ENCODE measurements at regions of chr7 and their contacts with region 1.

Region 1: DNA sequence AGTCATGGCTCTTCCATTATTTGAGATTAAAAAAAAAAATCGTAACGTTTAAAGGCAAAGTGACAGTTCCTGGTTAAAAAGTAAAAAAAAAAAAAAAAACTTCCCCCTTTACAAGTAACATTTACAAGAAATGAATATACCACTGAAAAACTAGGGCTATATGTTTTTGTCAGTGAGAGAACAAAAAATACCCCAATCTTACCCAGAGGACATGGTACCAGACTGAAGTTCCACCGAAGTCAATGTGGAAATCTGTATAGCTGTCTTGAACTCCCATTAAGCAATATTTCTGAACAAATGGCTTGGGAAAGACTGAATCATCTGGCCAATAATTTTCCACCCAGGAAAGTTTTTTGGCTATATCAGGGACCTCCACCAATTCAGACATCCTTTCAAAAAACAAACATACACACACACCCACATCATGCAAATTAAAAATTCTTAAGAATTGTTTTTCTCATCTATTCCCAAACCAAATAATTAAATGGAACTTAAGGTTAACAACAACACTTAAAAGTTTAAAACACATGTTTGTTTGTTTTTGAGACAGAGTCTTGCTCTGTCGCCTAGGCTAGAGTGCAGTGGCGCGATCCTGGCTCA is 50.2 kb downstream of the KDM7A start:
- DNase-seq: no peak
- H3K4me3 ChIP-seq: no peak overlapping the region
- H3K27ac ChIP-seq: no peak overlapping the region
- H3K4me1 ChIP-seq: peaks cover 2% of the 10 kb centered on the region
- H3K27me3 ChIP-seq: no peaks in the 10 kb centered on the region
- CTCF ChIP-seq: no peak
- EP300 ChIP-seq: no peak
- POLR2A ChIP-seq: no peak

Region 2: GRCh38 chr7:141114029-141114671 is 987.6 kb after region 1 on chr7:
- intact Hi-C with region 1: loop called in 1 of 4 experiments (anchors 5 kb)
- DNase-seq: no peak
- H3K4me3 ChIP-seq: no peak overlapping the region
- H3K27ac ChIP-seq: no peak overlapping the region
- H3K4me1 ChIP-seq: no peaks in the 10 kb centered on the region
- H3K27me3 ChIP-seq: no peaks in the 10 kb centered on the region
- CTCF ChIP-seq: no peak
- EP300 ChIP-seq: no peak
- POLR2A ChIP-seq: no peak